ENCODE measurements at regions of chr18 and their contacts with region 1.

Region 1: GRCh38 chr18:50356036-50356945 is 18.6 kb upstream of the SKA1 start:
- DNase-seq: peak in 1 of 4 experiments; percentile 36
- ATAC-seq: peak; percentile 78
- H3K4me3 ChIP-seq: no peak overlapping the region
- H3K27ac ChIP-seq: peak overlapping the region; percentile 25; the same call in 1 of the 3 replicates
- H3K4me1 ChIP-seq: peaks cover 13 to 30% of the 10 kb centered on the region in 2 experiments
- H3K27me3 ChIP-seq: no peaks in the 10 kb centered on the region
- CTCF ChIP-seq: peak in 2 of 3 experiments; percentile 9 to 30; a peak in 1 of 6 replicates
- EP300 ChIP-seq: no peak
- POLR2A ChIP-seq: no peak
- RAD21 ChIP-seq: no peak

Region 2: GRCh38 chr18:50051288-50051687 is 305.0 kb before region 1 on chr18:
- CTCF ChIA-PET with region 1: no interaction called
- POLR2A ChIA-PET with region 1: no interaction called
- in situ Hi-C with region 1: no loop called
- intact Hi-C with region 1: loop called (anchors 10 kb)
- DNase-seq: peak; percentile 6 to 10 (median 7)
- ATAC-seq: 0 out of 3 replicates have a peak, but pooled peaks have one; percentile 44
- H3K4me3 ChIP-seq: no peak overlapping the region
- H3K27ac ChIP-seq: no peak overlapping the region
- H3K4me1 ChIP-seq: no peaks in the 10 kb centered on the region
- H3K27me3 ChIP-seq: no peaks in the 10 kb centered on the region
- CTCF ChIP-seq: peak; percentile 9 to 42 (median 31); a peak in 2 of 6 replicates
- EP300 ChIP-seq: no peak
- POLR2A ChIP-seq: no peak
- RAD21 ChIP-seq: peak in 1 of 2 experiments; percentile 36; a peak in 2 of 4 replicates

Region 3: GRCh38 chr18:50203801-50204604 is 152.3 kb before region 1 on chr18:
- CTCF ChIA-PET with region 1: no interaction called
- POLR2A ChIA-PET with region 1: interaction called, 3 read pairs
- in situ Hi-C with region 1: loop called (anchors 10 kb)
- intact Hi-C with region 1: loop called (anchors 5 kb)
- DNase-seq: peak; percentile 9 to 60 (median 24)
- ATAC-seq: peak; percentile 84
- H3K4me3 ChIP-seq: no peak overlapping the region
- H3K27ac ChIP-seq: no peak overlapping the region
- H3K4me1 ChIP-seq: no peaks in the 10 kb centered on the region; a peak in 1 of 5 replicates
- H3K27me3 ChIP-seq: peaks cover 4 to 12% of the 10 kb centered on the region in 2 experiments; a peak in 3 of 5 replicates
- CTCF ChIP-seq: peak; percentile 53 to 64 (median 62)
- EP300 ChIP-seq: no peak
- POLR2A ChIP-seq: no peak
- RAD21 ChIP-seq: peak; percentile 28 to 65; a peak in 3 of 4 replicates

Region 4: DNA sequence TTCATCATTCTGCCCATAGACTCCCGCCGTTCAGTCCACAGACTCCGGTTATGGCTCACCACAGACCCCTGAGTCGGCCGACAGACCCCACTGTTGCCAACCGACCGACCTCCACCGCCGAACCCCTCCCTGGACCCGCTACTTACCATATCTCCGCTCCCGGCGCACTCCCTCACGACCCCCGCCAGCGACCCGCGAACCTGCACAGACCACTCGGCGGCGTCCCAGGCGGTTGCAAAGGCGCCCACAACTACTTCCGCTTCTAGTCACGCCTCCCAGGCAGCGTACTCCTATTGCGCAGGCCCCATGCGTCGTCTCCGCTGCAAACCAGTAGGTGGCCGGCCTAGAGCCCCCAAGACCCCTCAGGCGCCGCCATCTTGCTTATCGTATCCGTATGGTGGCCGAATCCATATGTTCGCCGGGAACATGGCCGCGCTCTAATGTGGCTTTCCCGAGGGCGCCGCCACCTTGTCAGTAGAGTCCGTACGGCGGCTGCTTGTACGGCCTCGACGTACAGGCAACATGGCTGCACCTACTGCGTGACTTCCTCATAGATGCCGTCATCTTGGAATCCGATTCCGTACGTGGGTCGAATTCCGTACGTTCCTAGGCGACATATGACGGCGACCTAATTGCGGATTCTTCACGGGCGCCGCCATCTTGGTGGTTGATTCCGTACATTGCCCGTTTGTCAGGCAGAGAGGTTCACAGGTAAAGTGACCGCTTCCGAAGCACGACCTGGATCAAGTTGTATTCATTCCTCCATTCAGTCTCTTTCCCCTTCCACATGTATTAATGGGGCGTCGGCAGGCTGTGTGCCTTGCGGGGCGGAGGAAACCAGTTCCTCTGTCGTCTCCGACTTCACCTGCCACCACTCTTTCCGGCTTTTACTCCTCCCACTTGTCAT is 68.6 kb before region 1 on chr18 and contains the start of gene CXXC1:
- CTCF ChIA-PET with region 1: no interaction called
- POLR2A ChIA-PET with region 1: no interaction called
- in situ Hi-C with region 1: no loop called
- intact Hi-C with region 1: loop called (anchors 2 kb)
- DNase-seq: peak; percentile 81 to 97 (median 88)
- ATAC-seq: peak; percentile 95
- H3K4me3 ChIP-seq: peak within 1 kb of the TSS; percentile 84
- H3K27ac ChIP-seq: peak within 1 kb of the TSS; percentile 89
- H3K4me1 ChIP-seq: peaks cover 3 to 21% of the 10 kb centered on the region in 2 experiments; a peak in 3 of 5 replicates
- H3K27me3 ChIP-seq: no peaks in the 10 kb centered on the region
- CTCF ChIP-seq: peak; percentile 30 to 43 (median 39); a peak in 4 of 6 replicates
- EP300 ChIP-seq: 0 out of 2 replicates have a peak, but pooled peaks have one; percentile 4
- POLR2A ChIP-seq: peak; percentile 76
- RAD21 ChIP-seq: peak in 1 of 2 experiments; percentile 34; a peak in 3 of 4 replicates
- polyA plus RNA-seq, gene CXXC1: 3.4 to 7.4 TPM

Region 5: GRCh38 chr18:50429207-50429948 is 73.1 kb after region 1 on chr18:
- CTCF ChIA-PET with region 1: no interaction called
- POLR2A ChIA-PET with region 1: no interaction called
- in situ Hi-C with region 1: no loop called
- intact Hi-C with region 1: loop called (anchors 5 kb)
- DNase-seq: peak; percentile 14 to 45 (median 19)
- ATAC-seq: 0 out of 3 replicates have a peak, but pooled peaks have one; percentile 19
- H3K4me3 ChIP-seq: no peak overlapping the region
- H3K27ac ChIP-seq: no peak overlapping the region
- H3K4me1 ChIP-seq: peaks cover 0 to 16% of the 10 kb centered on the region in 2 experiments; a peak in 3 of 5 replicates
- H3K27me3 ChIP-seq: no peaks in the 10 kb centered on the region; a peak in 1 of 5 replicates
- CTCF ChIP-seq: peak; percentile 11 to 50 (median 41); a peak in 5 of 6 replicates
- EP300 ChIP-seq: no peak
- POLR2A ChIP-seq: no peak
- RAD21 ChIP-seq: peak; percentile 27 to 44; a peak in 1 of 4 replicates